Transverse colon (tissue), 4 donors: ENCODE measurements at regions of chr5 and their contacts with region 1.

Region 1: GRCh38 chr5:17228821-17229291 is 11.4 kb downstream of the BASP1 start:
- DNase-seq: no peak
- H3K4me3 ChIP-seq: no peak overlapping the region
- H3K27ac ChIP-seq: no peak overlapping the region
- H3K4me1 ChIP-seq: no peaks in the 10 kb centered on the region
- H3K27me3 ChIP-seq: no peaks in the 10 kb centered on the region
- CTCF ChIP-seq: no peak
- EP300 ChIP-seq: no peak
- POLR2A ChIP-seq: no peak

Region 2: GRCh38 chr5:17190242-17190778 is 38.5 kb before region 1 on chr5:
- in situ Hi-C with region 1: no loop called
- intact Hi-C with region 1: no loop called
- DNase-seq: no peak
- H3K4me3 ChIP-seq: no peak overlapping the region
- H3K27ac ChIP-seq: peak overlapping the region in 3 of 4 donors; percentile 13 to 34 (median 22)
- H3K4me1 ChIP-seq: peaks cover 3 to 31% (median 13%) of the 10 kb centered on the region in 4 donors
- H3K27me3 ChIP-seq: no peaks in the 10 kb centered on the region
- CTCF ChIP-seq: peak; percentile 77 to 89 (median 84)
- EP300 ChIP-seq: no peak
- POLR2A ChIP-seq: no peak

Region 3: GRCh38 chr5:18281682-18282557 is 1053.1 kb after region 1 on chr5:
- in situ Hi-C with region 1: loop called in 1 of 4 experiments (anchors 10 kb)
- intact Hi-C with region 1: no loop called
- DNase-seq: no peak
- H3K4me3 ChIP-seq: no peak overlapping the region
- H3K27ac ChIP-seq: no peak overlapping the region
- H3K4me1 ChIP-seq: no peaks in the 10 kb centered on the region
- H3K27me3 ChIP-seq: no peaks in the 10 kb centered on the region
- CTCF ChIP-seq: peak in 2 of 5 experiments; percentile 23 to 31
- EP300 ChIP-seq: no peak
- POLR2A ChIP-seq: no peak